Vagina (tissue), 2 donors: ENCODE measurements at regions of chr1 and their contacts with region 1.

Region 1: DNA sequence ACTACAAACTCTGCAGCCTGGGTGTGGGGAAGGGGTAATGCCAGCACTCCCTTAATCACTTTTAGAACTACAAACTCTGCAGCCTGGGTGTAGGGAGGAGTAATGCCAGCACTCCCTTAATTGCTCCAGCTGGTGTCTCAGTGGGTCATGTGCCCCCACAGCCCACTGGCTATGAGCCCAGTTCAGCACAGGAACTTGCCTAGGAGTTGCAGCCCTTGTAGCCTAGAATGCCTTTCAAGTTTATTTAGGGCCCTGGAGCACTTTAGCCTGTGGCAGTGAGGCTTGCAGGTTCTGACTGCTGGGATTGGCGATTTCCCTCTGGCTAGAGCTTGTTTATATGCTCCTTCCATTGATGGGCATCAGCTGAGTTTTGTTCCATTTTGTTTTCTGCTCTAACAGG is 17.1 kb downstream of the VN1R5 start:
- DNase-seq: no peak
- H3K4me3 ChIP-seq: no peak overlapping the region
- H3K27ac ChIP-seq: no peak overlapping the region
- H3K4me1 ChIP-seq: no peaks in the 10 kb centered on the region
- H3K27me3 ChIP-seq: no peaks in the 10 kb centered on the region
- CTCF ChIP-seq: no peak
- POLR2A ChIP-seq: no peak

Region 2: DNA sequence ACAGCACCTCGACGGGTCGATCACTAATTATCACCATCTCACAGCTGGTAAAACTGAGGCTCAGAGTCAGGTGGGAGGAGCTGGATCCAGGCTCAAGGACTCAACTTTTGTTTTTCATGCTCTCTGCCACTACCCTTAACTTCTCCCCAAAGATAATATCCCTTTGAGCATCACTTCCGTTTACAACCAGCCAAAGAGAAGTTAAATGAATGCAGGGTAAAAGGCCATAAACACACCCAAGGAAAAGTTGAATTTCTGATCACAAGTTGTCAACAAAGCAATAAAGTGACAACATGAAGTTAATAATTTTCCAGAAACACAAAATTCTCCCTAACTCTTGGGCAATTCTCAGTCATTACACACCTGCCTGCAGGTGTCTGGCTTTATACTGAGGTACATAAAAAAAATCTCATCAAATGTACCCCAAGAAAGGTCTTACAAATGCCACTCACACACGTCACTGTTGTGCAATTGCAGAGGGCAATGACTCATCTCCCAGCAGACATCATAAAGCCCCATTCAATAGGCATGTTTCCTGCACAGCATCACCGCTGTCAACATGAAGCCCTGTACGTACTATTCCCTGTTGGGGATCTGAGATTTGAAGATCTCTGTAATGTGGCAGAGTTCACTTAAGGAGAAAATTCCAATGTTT is 1358.5 kb after region 1 on chr1:
- intact Hi-C with region 1: loop called (anchors 10 kb)
- DNase-seq: no peak
- H3K4me3 ChIP-seq: no peak overlapping the region
- H3K27ac ChIP-seq: no peak overlapping the region
- H3K4me1 ChIP-seq: no peaks in the 10 kb centered on the region
- H3K27me3 ChIP-seq: no peaks in the 10 kb centered on the region
- CTCF ChIP-seq: no peak
- POLR2A ChIP-seq: no peak